GM13977 (cell line): ENCODE measurements at regions of chr9 and their contacts with region 1.

Region 1: GRCh38 chr9:6681147-6681956 is 35.8 kb upstream of the GLDC start:
- DNase-seq: peak; percentile 92
- CTCF ChIP-seq: no peak

Region 2: GRCh38 chr9:6467006-6467625 is 214.2 kb before region 1 on chr9:
- in situ Hi-C with region 1: no loop called
- DNase-seq: no peak
- CTCF ChIP-seq: no peak

Region 3: DNA sequence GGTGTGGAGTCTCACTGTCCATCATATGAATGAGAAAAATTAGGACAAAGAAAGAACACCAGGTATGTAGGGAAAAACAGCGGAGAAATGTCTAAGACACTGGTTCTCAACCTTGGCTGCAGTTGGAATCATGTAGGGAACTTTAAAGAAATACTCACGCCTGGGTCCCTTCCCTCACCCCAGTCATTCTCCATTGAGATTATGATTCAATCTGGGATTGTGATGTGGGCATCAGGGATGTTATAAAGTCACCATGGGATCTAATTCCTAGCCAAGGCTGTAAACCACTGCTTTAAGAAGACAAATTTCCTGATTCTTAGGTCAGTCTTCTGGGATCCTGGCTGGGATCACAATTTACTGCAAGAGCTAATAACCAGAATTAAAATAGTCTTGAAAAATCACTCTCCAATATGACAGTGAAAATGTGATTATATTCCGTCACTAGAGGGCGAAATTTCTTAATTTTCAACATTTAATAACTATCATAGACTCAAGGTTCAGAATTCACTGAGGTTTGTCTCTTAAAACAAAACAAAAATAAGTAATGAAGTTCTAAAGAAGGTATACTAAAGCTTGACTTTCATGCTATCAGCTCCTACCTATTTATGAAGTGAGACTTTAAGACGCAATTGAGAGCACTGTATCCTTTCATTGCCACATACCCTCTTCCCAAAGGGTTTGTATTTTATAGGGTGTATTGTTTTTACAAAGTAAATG is 96.3 kb before region 1 on chr9:
- in situ Hi-C with region 1: loop called (anchors 10 kb)
- DNase-seq: peak; percentile 39
- CTCF ChIP-seq: peak; percentile 42